BJ (cell line): ENCODE measurements at regions of chr7 and their contacts with region 1.

Region 1: DNA sequence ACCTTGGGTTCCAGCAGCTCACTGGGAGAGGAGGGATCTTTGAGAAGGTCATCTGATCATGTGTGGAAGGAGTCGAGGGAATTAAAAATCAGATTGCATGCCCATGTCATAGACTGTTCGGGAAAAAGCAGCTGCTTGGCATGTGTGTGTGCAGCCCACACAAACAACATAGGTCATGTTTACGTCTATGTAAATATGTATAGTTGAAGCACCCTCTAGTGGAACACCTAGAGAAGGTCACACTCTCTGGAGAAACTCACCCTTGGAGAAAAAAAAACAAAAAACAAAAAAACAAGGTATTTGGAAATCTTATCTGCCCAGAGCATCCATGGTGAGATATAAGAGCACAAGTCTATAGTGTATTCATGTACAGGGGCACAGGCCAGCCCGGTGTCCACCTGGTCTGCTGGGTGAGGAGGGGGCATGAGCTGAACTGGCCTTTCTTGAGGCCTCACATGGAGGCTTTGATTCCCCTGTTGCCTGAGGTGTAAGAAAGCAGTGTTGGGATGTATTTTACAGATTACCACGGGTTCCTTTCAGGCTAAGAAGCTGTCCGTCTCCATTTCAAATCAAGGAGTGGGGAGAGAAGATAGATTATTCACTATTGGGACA is 98.0 kb downstream of the NPY start:
- DNase-seq: no peak
- H3K4me3 ChIP-seq: no peak overlapping the region
- H3K27me3 ChIP-seq: no peaks in the 10 kb centered on the region
- CTCF ChIP-seq: peak; percentile 45

Region 2: DNA sequence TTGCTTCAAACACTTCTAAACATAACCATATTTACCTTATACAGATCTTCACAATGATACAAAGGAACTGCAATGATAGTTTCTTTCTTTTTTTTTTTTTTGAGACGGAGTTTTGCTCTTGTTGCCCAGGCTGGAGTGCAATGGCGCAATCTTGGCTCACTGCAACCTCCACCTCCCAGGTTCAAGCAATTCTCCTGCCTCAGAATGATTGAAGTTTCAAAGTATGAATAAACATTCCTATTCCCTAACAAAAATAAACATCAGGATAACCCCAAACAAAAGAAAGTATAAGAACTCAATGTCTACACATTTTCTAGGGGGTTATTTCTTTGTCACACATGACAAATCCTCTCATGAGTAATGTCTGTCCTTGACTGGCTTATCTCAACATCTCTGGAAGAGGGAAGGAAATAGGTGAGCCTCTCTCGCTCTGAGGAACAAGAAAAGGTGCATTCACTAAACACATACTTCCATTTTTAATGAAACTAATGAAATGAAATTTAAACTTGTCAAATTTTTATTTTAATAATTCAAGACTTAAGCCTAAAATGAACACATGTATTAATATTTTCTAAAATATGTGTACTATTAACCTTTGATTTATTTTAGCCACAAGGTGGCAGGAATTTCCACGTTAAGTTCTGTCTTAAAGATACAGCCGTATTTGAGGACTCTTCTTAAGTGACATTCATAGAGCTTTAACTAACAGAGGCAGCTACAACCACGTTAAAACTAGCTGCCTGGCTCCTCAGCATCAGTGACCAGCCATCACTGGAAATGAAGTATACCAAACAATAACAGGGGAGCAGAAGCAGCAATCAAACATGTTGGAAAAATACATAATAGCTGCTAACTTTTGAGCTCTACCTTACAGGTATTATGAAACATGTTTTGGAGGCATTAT is 1024.6 kb before region 1 on chr7:
- CTCF ChIA-PET with region 1: no interaction called
- POLR2A ChIA-PET with region 1: no interaction called
- DNase-seq: no peak
- H3K4me3 ChIP-seq: no peak overlapping the region
- H3K27me3 ChIP-seq: no peaks in the 10 kb centered on the region
- CTCF ChIP-seq: 0 out of 2 replicates have a peak, but pooled peaks have one; percentile 8

Region 3: GRCh38 chr7:23863209-23863798 is 518.7 kb before region 1 on chr7:
- CTCF ChIA-PET with region 1: interaction called, 18 read pairs
- POLR2A ChIA-PET with region 1: no interaction called
- DNase-seq: no peak
- H3K4me3 ChIP-seq: no peak overlapping the region
- H3K27me3 ChIP-seq: no peaks in the 10 kb centered on the region
- CTCF ChIP-seq: peak; percentile 78

Region 4: GRCh38 chr7:23938937-23939552 is 443.0 kb before region 1 on chr7:
- CTCF ChIA-PET with region 1: interaction called, 16 read pairs
- POLR2A ChIA-PET with region 1: no interaction called
- DNase-seq: no peak
- H3K4me3 ChIP-seq: no peak overlapping the region
- H3K27me3 ChIP-seq: no peaks in the 10 kb centered on the region
- CTCF ChIP-seq: peak; percentile 68

Region 5: DNA sequence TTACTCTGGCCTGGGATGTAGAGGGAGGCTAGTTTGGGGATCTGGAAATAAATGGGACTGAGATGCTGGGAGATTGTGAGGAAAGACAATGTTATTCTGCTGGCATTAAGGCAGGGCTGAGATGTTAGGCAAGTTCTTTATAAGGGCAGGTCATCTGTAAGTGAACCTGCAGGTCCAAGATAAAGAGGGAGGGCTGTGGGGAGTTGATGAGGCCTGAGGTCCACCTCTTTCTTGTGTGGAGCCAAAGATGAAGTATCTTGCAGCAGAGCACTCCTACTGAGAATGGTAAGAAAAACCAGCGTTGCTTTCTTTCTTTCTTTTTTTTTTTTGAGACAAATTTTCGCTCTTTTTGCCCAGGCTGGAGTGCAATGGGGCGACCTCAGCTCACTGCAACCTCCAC is 723.9 kb after region 1 on chr7:
- CTCF ChIA-PET with region 1: no interaction called
- POLR2A ChIA-PET with region 1: no interaction called
- DNase-seq: no peak
- H3K4me3 ChIP-seq: no peak overlapping the region
- H3K27me3 ChIP-seq: no peaks in the 10 kb centered on the region
- CTCF ChIP-seq: no peak